ENCODE measurements at regions of chr2 and their contacts with region 1.

Region 1: DNA sequence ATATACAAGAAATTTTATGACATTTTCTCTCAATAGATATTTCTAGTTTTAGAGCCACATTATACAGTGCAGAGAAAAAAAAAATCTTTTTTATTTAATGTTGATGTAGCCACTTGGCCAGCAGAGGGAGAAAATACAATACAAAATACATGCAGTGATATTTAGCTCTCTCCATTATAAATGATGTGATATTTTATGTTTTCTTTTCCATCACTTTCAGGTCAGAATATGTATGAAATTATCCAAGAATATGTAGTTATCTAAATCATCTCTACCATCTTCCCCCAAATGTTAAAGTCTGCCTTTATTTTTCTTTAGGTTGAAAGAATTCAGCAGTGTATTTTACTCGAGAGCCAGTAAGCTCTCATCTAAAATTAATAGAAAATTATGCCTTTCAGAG is 533.6 kb upstream of the FSHR start:
- DNase-seq: no peak
- H3K4me3 ChIP-seq: no peak overlapping the region
- H3K27ac ChIP-seq: no peak overlapping the region
- H3K4me1 ChIP-seq: no peaks in the 10 kb centered on the region
- H3K27me3 ChIP-seq: no peaks in the 10 kb centered on the region
- CTCF ChIP-seq: peak in 1 of 3 experiments; percentile 1; a peak in 1 of 4 replicates
- EP300 ChIP-seq: no peak
- POLR2A ChIP-seq: no peak
- RAD21 ChIP-seq: peak in 1 of 2 experiments; percentile 34; a peak in 3 of 4 replicates

Region 2: GRCh38 chr2:49677227-49677626 is 10.7 kb before region 1 on chr2:
- CTCF ChIA-PET with region 1: interaction called, 16 read pairs
- POLR2A ChIA-PET with region 1: no interaction called
- DNase-seq: no peak
- H3K4me3 ChIP-seq: no peak overlapping the region
- H3K27ac ChIP-seq: no peak overlapping the region
- H3K4me1 ChIP-seq: no peaks in the 10 kb centered on the region
- H3K27me3 ChIP-seq: no peaks in the 10 kb centered on the region
- CTCF ChIP-seq: no peak
- EP300 ChIP-seq: no peak
- POLR2A ChIP-seq: no peak
- RAD21 ChIP-seq: no peak